Prostate gland (tissue), 2 donors: ENCODE measurements at regions of chr12 and their contacts with region 1.

Region 1: DNA sequence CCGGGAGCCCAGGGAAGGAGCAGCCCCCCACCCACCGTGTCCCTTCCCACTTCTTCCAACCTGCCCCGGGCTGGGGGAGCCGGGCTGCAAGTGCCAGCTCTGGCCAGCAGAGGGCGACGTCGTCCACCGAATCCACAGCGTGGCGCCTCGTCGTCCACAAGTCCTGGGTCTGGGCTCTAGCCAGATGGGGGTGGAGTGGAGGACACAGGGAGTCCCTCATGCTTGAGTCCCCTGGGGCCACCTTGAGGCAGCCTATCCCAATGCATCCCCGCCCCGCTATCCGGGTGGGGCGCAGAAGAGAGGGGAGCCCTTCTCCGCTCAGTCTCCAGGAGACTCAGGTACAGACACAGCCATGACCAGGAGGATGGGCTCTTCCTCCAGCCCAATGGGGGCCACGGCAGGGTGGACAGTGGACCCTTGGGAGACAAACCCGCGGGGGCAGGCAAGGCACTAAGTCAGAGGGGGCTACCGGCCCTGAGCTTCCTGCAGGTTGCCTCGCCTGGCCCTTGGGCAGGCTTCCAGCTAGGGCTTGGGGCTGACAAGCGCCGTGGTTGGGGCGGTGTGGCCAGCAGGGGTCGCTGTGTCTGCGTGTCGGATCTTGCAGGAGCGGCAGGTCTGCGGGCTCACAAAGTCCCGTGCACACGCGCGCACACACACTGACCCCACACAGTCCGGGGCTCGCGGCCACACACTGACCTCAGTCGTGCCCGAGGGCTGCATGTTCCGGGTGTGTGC is 5.5 kb downstream of the AQP5 start:
- DNase-seq: peak; percentile 79
- H3K4me3 ChIP-seq: peak overlapping the region; percentile 6 to 16
- H3K27ac ChIP-seq: no peak overlapping the region
- H3K4me1 ChIP-seq: peaks cover 3% of the 10 kb centered on the region
- H3K27me3 ChIP-seq: no peaks in the 10 kb centered on the region
- CTCF ChIP-seq: peak; percentile 72 to 94 (median 86)
- POLR2A ChIP-seq: peak; percentile 9

Region 2: GRCh38 chr12:49866859-49867579 is 100.2 kb before region 1 on chr12:
- intact Hi-C with region 1: loop called (anchors 5 kb)
- DNase-seq: peak; percentile 72
- H3K4me3 ChIP-seq: no peak overlapping the region
- H3K27ac ChIP-seq: no peak overlapping the region
- H3K4me1 ChIP-seq: peaks cover 8% of the 10 kb centered on the region
- H3K27me3 ChIP-seq: no peaks in the 10 kb centered on the region
- CTCF ChIP-seq: peak; percentile 93 to 96 (median 95)
- POLR2A ChIP-seq: no peak

Region 3: DNA sequence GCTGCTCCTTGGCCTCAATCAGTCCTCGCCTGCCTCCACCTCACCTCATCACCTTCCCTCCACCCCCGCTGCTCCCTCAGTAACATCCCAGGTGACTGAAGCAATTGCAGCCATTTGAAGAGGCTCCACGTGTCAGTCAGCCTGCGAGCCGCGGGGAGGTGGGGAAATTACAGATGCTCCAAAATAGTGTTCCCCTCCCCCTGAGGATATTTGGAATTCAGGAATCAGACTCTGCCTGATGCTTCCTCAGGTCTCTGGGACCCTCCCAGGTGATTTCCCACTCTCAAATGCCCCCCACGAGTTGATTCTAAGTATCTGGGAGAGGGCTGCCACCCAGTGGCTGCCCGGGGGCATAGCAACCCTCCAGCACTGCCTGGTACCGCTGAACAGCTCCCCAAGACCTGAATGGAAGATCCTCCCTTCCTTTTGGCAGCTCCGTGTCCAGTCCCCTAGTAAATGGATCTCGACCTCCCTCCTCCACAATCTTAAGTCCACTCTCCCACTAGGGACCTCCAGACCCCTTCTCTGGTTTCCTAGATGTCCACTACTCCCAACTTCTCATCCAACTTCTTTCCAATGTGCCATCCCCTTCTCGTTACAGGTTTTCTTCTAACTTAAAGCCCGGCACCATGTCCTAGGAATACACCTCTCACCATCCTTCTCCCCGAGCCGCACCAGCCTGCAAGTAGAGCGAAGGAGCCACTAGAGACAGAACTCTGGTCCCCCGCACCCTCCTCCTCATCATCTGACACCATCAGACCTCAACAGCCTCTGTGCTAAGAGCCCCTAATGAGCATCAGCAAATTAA is 88.8 kb after region 1 on chr12:
- intact Hi-C with region 1: loop called (anchors 5 kb)
- DNase-seq: peak; percentile 20
- H3K4me3 ChIP-seq: no peak overlapping the region
- H3K27ac ChIP-seq: no peak overlapping the region
- H3K4me1 ChIP-seq: no peaks in the 10 kb centered on the region
- H3K27me3 ChIP-seq: no peaks in the 10 kb centered on the region
- CTCF ChIP-seq: peak; percentile 74 to 91 (median 79)
- POLR2A ChIP-seq: no peak